AG04449 (cell line): ENCODE measurements at regions of chr5 and their contacts with region 1.

Region 1: DNA sequence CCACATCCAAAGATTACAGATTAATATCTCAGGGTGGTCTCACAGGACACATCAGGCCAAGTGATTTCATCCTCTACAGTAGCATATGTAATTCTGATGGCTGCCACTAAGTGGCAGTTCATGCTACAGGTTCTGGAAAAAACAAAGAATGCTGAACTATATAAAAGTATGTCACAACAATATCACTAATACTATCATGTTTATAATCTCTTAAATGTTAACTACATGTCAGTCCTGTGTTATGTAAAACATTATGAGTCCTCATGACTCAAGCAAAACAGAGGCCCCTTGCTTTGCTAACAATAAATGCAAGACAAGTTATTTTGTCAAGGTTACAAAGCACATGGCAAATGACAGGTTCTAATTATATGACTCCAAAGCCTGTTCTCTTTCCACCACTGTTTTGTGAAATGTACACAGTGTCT is 233.2 kb downstream of the FBXL17 start:
- DNase-seq: no peak
- H3K4me3 ChIP-seq: no peak overlapping the region
- CTCF ChIP-seq: peak; percentile 50

Region 2: DNA sequence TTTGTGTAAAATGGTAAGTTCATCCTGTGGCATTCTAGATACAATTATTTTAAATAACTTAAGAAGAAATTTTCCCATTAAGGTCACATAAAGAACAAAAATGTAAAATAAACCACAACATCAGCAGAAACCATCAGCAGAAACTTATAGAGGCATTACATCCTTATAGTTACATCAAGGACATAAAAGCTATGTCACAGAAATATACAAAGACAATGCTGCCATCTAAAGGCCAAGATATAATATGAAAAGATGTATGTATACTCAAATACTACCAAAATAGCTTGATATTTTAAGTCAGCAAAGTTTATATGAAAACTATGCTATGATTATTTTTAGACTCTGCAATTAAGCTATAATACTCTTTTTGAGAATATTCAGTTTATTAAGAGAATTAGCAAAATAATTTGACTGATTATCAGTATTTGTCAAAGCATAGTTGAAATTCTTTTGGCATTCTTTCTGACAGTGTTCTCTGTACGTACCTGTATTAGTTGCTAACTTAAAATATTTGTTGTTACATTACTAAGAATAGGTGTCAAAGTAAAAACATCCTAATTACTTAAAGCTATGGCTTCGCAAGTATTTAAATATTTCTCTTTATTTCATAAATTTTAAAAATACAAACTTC is 196.9 kb after region 1 on chr5:
- CTCF ChIA-PET with region 1: interaction called, 13 read pairs
- POLR2A ChIA-PET with region 1: no interaction called
- DNase-seq: peak; percentile 7
- H3K4me3 ChIP-seq: no peak overlapping the region
- CTCF ChIP-seq: no peak